MCF 10A (cell line): ENCODE measurements at regions of chr14 and their contacts with region 1.

Region 1: GRCh38 chr14:77028384-77029231 is at the start of gene IRF2BPL:
- DNase-seq: peak; percentile 98
- H3K4me3 Mint-ChIP-seq: peak within 1 kb of the TSS; percentile 81
- H3K27ac Mint-ChIP-seq: peak within 1 kb of the TSS; percentile 88
- H3K4me1 Mint-ChIP-seq: peaks cover 28% of the 10 kb centered on the region
- H3K27me3 Mint-ChIP-seq: no peaks in the 10 kb centered on the region
- CTCF ChIP-seq: no peak
- total RNA-seq, gene IRF2BPL: 22.1 and 26.0 TPM in 2 replicates

Region 2: GRCh38 chr14:76910371-76910890 is 118.2 kb before region 1 on chr14:
- CTCF ChIA-PET with region 1: interaction called, 56 read pairs
- POLR2A ChIA-PET with region 1: interaction called, 15 read pairs
- intact Hi-C with region 1: loop called (anchors 1 kb)
- DNase-seq: no peak
- H3K4me3 Mint-ChIP-seq: no peak overlapping the region
- H3K27ac Mint-ChIP-seq: no peak overlapping the region
- H3K4me1 Mint-ChIP-seq: peaks cover 6% of the 10 kb centered on the region
- H3K27me3 Mint-ChIP-seq: no peaks in the 10 kb centered on the region
- CTCF ChIP-seq: no peak

Region 3: DNA sequence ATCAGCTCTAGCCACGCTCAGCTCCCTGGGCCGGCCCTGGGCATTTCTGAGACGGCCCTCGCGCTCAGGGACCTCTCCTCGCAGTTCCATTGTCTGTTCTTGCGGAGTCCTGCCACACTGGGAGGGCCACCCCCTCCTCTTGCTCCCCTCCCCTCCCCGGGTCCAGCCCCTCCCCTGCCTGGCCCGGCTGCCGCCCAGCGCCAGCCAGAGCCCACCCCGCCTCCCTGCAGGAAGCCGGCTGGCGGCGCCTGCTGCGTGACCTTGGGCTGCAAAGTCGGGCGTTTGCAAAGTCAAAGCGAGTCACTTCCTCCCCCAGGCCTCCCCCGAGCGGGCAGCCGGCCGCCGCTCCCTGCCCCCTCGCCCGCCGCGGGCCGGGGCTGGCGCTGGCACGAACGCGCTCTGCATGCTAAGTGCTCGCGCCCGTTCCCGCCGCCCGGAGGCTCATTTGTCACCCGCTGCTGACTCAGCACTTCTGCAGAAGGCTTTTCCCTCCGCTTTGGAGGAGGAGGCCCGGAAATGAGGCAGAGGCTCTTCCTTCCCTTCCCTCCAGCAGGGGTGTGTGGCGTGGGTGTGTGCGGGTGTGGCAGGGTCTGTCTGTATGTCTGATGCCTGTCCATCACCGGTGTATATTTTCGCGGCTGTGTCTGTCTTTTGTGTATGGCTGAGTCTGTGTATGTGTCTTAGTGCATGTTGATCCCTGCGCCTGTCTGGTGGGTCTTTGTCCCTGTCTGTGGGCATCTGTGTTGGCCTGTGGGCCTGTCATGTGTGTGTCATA is 72.1 kb before region 1 on chr14:
- CTCF ChIA-PET with region 1: interaction called, 14 read pairs
- POLR2A ChIA-PET with region 1: interaction called, 325 read pairs
- intact Hi-C with region 1: loop called (anchors 1 kb)
- DNase-seq: peak; percentile 97
- H3K4me3 Mint-ChIP-seq: peak overlapping the region; percentile 49
- H3K27ac Mint-ChIP-seq: peak overlapping the region; percentile 92
- H3K4me1 Mint-ChIP-seq: peaks cover 55% of the 10 kb centered on the region
- H3K27me3 Mint-ChIP-seq: no peaks in the 10 kb centered on the region
- CTCF ChIP-seq: no peak

Region 4: DNA sequence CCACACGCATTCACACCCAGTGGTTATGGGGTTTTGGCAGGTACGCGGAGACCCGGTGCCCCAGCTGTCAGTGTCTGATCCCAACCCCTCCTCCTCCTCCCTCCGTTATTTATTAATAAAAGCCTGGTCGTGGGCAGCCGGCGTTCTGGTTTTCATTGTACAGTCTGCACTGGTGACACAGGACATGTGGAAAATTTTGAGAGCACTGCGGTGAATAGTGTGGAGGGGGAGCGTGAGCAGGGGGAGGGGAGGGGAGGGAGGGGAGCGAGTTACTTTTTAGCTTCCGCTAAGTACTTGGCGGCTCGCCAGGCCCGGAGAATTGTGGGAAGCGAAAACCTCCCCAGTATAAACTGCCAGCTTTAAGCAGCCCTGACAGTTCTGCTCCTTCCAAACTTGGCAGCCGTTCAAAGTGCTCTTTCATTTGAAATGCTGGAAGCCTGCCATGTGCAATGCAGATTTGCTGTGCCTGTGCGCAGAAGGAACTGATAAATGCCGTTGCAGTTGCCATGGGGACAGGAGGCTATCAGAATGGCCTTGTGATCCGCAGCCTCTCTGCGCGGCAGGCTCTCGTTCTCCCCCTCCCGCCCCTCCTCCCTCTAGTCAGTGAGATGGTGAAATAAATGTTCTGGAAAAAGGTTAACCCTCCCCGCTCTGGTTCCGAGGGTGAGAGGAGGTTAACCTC is 11.6 kb after region 1 on chr14:
- CTCF ChIA-PET with region 1: interaction called, 18 read pairs
- POLR2A ChIA-PET with region 1: interaction called, 721 read pairs
- intact Hi-C with region 1: loop called (anchors 1 kb)
- DNase-seq: peak; percentile 99
- H3K4me3 Mint-ChIP-seq: peak overlapping the region; percentile 54
- H3K27ac Mint-ChIP-seq: peak overlapping the region; percentile 82
- H3K4me1 Mint-ChIP-seq: peaks cover 59% of the 10 kb centered on the region
- H3K27me3 Mint-ChIP-seq: no peaks in the 10 kb centered on the region
- CTCF ChIP-seq: no peak

Region 5: DNA sequence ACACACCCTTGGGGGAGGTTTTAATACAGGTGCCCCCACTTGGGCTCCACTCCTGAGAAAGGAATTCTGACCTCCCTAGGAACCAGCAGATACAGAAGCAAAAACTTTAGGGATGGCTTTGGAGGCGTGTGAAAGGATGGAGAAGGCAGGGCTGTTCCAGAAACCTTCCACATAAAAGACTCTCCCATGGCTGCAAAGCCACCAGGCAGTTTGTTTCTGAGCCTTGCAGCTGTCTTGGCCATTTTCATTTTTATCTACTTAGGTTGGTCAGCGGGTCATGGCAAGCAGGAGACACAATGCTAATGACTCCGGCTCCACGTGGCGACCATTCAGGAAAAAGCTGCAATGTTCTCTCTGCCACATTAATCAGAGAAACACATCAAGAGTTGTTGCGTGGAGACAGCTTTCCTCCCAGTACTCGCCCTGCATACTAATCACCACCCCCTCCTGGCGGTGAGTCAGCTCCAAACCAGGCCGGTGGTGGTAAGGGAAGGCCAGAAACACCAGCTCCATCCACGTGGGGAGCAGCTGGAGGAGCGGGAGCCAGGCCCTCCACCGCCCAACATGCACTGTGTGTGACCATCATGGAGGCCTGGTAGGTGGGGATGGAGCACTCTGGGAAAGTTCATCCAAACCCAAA is 30.8 kb after region 1 on chr14:
- CTCF ChIA-PET with region 1: interaction called, 12 read pairs
- POLR2A ChIA-PET with region 1: interaction called, 25 read pairs
- intact Hi-C with region 1: no loop called
- DNase-seq: peak; percentile 83
- H3K4me3 Mint-ChIP-seq: no peak overlapping the region
- H3K27ac Mint-ChIP-seq: peak overlapping the region; percentile 78
- H3K4me1 Mint-ChIP-seq: peaks cover 12% of the 10 kb centered on the region
- H3K27me3 Mint-ChIP-seq: no peaks in the 10 kb centered on the region
- CTCF ChIP-seq: peak; percentile 15

Region 6: GRCh38 chr14:77097700-77098528 is 69.3 kb after region 1 on chr14 and contains the start of gene CIPC:
- CTCF ChIA-PET with region 1: interaction called, 4 read pairs
- POLR2A ChIA-PET with region 1: interaction called, 12 read pairs
- intact Hi-C with region 1: no loop called
- DNase-seq: peak; percentile 99
- H3K4me3 Mint-ChIP-seq: peak within 1 kb of the TSS; percentile 98
- H3K27ac Mint-ChIP-seq: peak within 1 kb of the TSS; percentile 99
- H3K4me1 Mint-ChIP-seq: peaks cover 43% of the 10 kb centered on the region
- H3K27me3 Mint-ChIP-seq: no peaks in the 10 kb centered on the region
- CTCF ChIP-seq: no peak
- total RNA-seq, gene CIPC: 9.7 and 11.4 TPM in 2 replicates

Region 7: GRCh38 chr14:77161011-77161410 is 132.4 kb after region 1 on chr14:
- CTCF ChIA-PET with region 1: no interaction called
- POLR2A ChIA-PET with region 1: no interaction called
- intact Hi-C with region 1: no loop called
- DNase-seq: no peak
- H3K4me3 Mint-ChIP-seq: no peak overlapping the region
- H3K27ac Mint-ChIP-seq: no peak overlapping the region
- H3K4me1 Mint-ChIP-seq: peaks cover 13% of the 10 kb centered on the region
- H3K27me3 Mint-ChIP-seq: no peaks in the 10 kb centered on the region
- CTCF ChIP-seq: no peak